ENCODE measurements at regions of chr11 and their contacts with region 1.

Region 1: DNA sequence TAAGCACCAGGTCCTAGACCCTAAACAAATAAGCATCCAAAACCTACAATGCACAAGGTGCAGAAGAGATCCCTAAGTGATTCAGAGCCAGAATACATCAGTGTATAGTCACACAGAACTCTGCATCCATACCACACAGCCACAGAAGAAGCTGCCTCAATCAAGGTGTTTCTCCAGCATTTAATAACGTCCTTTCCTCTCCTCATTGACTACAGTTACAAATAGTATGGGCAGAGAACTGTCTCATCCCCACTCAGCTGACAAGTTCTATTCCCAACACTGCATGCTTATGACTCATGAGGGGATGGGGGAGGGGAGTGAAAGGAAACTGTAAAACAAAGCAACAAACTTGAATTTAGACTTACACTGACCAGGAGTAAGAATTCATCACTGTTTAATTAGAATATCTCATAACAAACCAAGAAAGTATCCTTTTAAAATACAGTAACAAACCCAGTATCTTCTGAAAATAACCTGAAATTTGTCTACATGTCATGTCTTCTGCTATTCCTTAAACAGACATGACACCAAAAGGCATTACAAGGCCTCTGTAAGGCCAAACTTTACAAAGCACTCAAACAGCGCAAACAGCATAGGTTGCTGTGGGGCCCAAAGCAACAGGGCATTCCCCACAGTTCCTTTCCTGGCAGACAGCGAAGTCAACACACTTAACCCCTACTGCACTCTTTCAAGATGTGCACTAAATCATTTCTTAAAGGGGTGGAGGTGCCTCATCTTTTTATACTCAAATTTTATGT is 29.3 kb downstream of the CELF1 start:
- DNase-seq: no peak
- H3K4me3 Mint-ChIP-seq: peak overlapping the region; percentile 27
- H3K27ac Mint-ChIP-seq: peak overlapping the region; percentile 81
- H3K4me1 Mint-ChIP-seq: peaks cover 47% of the 10 kb centered on the region
- H3K27me3 Mint-ChIP-seq: no peaks in the 10 kb centered on the region

Region 2: GRCh38 chr11:47466701-47467250 is 56.9 kb before region 1 on chr11:
- intact Hi-C with region 1: no loop called
- DNase-seq: no peak
- H3K4me3 Mint-ChIP-seq: no peak overlapping the region
- H3K27ac Mint-ChIP-seq: peak overlapping the region; percentile 49
- H3K4me1 Mint-ChIP-seq: no peaks in the 10 kb centered on the region
- H3K27me3 Mint-ChIP-seq: no peaks in the 10 kb centered on the region

Region 3: DNA sequence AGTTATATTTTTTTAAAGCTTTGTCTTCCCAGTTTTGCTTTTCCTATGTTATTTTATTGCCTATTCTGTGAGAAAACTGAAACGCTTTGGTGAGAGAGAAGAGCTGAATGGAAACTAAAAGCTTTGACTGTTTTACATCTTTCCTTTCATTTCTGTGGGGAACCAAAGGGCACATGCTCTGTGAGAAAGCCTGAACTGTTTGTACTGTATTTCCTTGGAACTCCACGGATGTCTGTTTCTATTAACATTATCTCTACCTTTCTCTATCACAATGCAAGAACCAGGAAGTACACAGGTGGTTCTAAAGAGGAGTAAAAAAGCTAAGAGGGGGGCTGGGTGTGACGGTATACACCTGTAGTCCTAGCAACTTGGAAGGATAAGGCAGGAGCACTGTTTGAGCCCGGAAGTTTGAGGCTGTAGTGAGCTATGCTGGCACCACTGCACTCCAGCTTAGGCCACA is 14.5 kb before region 1 on chr11:
- intact Hi-C with region 1: loop called (anchors 2 kb)
- DNase-seq: no peak
- H3K4me3 Mint-ChIP-seq: no peak overlapping the region
- H3K27ac Mint-ChIP-seq: peak overlapping the region; percentile 79
- H3K4me1 Mint-ChIP-seq: peaks cover 67% of the 10 kb centered on the region
- H3K27me3 Mint-ChIP-seq: no peaks in the 10 kb centered on the region

Region 4: DNA sequence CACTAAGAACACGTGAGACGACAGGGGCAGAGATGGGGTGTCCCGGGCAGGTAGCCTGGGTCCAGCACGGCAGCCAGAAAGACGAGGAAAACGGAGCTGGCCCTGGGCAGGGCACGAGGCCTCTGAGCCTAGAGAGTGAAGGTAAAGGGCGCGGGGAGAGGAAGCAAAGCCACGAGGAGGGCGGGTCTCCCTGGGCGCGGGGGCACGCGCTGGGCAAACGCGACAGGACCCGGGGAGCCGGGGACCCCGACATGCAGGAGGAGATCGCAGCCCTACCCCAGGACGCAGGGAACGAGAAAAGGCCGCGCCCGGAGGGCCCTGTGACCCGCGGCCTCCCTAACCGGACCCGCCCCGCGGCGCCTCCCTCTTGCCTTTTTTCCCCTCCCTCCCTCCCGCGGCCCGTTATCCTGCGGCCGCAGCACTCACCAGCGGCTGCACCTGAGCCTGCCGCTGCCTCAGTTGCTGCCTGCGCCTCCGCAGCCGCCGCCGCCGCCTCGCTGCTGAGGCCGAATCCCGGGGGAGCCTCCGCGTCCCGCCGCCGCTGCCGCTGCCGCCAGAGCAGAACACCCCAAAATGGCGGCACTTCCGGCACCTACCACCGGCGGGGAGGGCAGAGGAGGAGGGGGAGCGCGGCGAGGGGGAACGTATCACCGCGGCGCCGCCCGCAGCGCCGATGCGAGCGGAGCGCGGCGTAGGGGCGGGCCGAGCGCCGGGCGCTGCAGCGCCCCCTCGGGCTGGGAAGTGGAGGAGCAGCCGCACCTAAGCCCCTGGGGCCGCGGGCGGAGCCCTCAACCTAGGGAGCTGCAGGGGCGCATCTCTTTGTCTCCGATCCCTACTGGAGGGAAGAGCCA is 29.1 kb after region 1 on chr11 and contains the start of gene CELF1:
- intact Hi-C with region 1: loop called (anchors 1 kb)
- DNase-seq: peak; percentile 92
- H3K4me3 Mint-ChIP-seq: peak within 1 kb of the TSS; percentile 100
- H3K27ac Mint-ChIP-seq: peak within 1 kb of the TSS; percentile 95
- H3K4me1 Mint-ChIP-seq: peaks cover 31% of the 10 kb centered on the region
- H3K27me3 Mint-ChIP-seq: no peaks in the 10 kb centered on the region
- total RNA-seq, gene CELF1: 129 and 132 TPM in 2 replicates